AG04449 (cell line): ENCODE measurements at regions of chr2 and their contacts with region 1.

Region 1: GRCh38 chr2:26846328-26847306 is 1.3 kb upstream of the DPYSL5 start:
- DNase-seq: peak; percentile 3
- H3K4me3 ChIP-seq: no peak overlapping the region
- CTCF ChIP-seq: peak; percentile 76

Region 2: DNA sequence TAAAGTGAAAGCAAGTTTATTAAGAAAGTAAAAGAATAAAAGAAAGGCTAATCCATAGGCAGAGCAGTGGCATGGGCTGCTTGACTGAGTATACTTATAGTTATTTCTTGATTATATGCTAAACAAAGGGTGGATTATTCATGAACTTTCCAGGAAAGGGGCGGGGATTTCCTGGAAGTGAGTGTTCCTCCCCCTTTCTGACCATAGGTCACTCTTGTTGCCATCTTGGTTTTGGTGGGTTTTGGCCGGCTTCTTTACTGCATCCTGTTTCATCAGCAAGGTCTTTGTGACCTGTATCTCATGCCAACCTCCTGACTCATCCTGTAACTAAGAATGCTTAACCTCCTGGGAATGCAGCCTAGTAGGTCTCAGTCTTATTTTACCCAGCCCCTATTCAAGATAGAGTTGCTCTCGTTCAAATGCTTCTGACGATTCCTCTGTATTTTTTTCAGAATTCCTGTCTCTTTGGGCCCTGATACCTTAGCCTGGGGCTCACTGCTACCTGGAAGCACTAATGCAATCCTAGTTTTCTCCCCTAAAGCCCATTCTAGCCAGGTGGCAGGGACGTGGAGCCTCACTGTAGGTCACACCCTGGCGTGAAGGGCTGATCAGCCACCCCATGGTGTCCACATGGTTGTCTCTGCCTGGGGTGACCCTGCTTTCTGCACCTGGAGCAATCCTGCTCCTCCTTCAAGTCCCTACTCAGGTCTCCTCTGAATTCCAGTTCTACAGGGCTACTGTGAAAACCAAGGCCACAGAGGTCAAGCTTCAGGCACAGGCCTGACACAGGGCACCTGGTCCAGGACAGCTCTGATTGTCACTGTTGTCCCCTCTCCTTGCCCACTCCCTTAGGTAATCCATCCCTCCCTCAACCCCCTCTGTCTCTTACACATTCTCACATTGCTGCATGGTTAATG is 88.5 kb before region 1 on chr2:
- CTCF ChIA-PET with region 1: no interaction called
- POLR2A ChIA-PET with region 1: no interaction called
- DNase-seq: peak; percentile 96
- H3K4me3 ChIP-seq: no peak overlapping the region; the same call in 1 of the 2 replicates
- CTCF ChIP-seq: no peak

Region 3: GRCh38 chr2:26861610-26862224 is 15.1 kb after region 1 on chr2:
- CTCF ChIA-PET with region 1: interaction called, 12 read pairs
- POLR2A ChIA-PET with region 1: no interaction called
- DNase-seq: no peak
- H3K4me3 ChIP-seq: no peak overlapping the region
- CTCF ChIP-seq: no peak

Region 4: DNA sequence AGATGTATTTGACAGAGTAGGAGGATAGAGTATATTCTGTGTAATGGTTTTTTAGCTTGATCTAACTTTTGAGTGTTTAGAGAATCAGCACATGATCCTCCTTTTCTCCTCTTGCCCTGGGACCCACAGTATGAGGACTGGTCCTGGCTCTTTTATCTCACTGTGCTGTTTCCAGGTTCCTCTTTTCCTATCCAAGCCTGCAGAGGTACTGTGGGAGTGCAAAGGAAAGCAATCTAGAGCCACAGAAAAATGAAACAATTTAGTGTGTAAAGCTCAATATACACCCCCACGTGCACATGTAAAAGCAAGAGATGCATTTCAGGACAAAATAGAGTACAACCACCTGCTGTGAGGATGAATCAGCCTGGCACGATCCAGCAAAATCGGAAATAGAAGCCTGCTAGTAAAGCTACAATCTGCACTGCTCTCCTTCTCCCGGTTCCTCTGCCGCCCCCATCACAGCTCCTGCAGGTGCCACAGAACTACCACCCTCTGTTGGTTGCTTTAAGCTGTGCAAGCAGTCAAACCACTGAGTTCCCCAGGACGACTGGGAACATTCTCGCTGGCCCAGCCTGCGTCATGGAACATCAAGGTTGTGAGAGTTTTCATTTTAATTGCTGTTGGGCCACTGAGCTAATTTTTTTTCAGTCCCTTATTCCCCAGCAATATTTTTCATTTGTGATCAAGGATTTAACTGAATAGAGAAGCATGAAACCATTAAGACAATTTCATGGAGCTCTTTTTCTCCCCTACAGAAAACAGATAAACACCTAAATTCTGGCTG is 76.0 kb after region 1 on chr2:
- CTCF ChIA-PET with region 1: interaction called, 17 read pairs
- POLR2A ChIA-PET with region 1: no interaction called
- DNase-seq: no peak
- H3K4me3 ChIP-seq: no peak overlapping the region
- CTCF ChIP-seq: peak; percentile 58

Region 5: GRCh38 chr2:26942543-26943295 is 96.1 kb after region 1 on chr2:
- CTCF ChIA-PET with region 1: interaction called, 309 read pairs
- POLR2A ChIA-PET with region 1: no interaction called
- DNase-seq: no peak
- H3K4me3 ChIP-seq: no peak overlapping the region
- CTCF ChIP-seq: peak; percentile 77

Region 6: DNA sequence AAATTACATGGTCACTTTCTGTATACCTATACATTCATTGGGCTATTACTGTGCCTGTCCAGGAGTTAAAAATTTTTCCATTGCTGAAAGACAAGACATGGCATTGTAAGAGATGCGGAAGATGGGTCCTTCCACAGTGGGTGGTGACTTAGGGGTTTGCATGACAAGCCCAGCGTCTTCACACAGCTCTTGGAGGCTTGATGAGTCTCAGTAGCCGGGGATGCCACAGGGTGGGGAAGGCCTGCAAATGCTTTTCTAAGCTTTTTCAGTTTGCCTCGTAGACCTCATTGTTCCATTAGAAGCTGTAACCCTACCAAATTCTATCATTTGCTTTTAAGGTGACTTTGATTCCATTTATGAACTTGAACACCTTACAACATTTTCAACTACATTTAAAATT is 105.8 kb after region 1 on chr2:
- CTCF ChIA-PET with region 1: interaction called, 24 read pairs
- POLR2A ChIA-PET with region 1: no interaction called
- DNase-seq: no peak
- H3K4me3 ChIP-seq: no peak overlapping the region
- CTCF ChIP-seq: no peak

Region 7: GRCh38 chr2:26988058-26988860 is 141.6 kb after region 1 on chr2:
- CTCF ChIA-PET with region 1: interaction called, 11 read pairs
- POLR2A ChIA-PET with region 1: no interaction called
- DNase-seq: peak; percentile 33
- H3K4me3 ChIP-seq: no peak overlapping the region
- CTCF ChIP-seq: no peak

Region 8: GRCh38 chr2:27065128-27065527 is 218.5 kb after region 1 on chr2:
- CTCF ChIA-PET with region 1: no interaction called
- POLR2A ChIA-PET with region 1: no interaction called
- DNase-seq: no peak
- H3K4me3 ChIP-seq: no peak overlapping the region
- CTCF ChIP-seq: no peak